ENCODE measurements at regions of chr10 and their contacts with region 1.

Region 1: DNA sequence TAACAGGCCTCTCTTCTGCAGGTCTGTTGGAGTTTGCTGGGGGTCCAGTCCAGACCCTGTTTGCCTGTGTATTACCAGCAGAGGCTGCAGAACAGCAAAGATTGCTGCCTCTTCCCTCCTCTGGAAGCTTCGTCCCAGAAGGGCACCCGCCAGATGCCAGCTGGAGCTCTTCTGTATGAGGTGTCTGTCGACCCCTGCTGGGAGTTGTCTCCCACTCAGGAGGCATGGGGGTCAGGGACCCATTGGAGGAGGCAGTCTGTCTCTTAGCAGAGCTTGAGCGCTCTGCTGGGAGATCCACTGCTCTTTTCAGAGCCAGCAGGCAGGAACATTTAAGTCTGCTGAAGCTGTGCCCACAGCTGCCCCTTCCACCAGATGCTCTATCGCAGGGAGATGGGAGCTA is 361.1 kb upstream of the NRP1 start:
- DNase-seq: no peak
- ATAC-seq: no peak
- H3K4me3 ChIP-seq: no peak overlapping the region
- H3K27ac ChIP-seq: no peak overlapping the region
- H3K4me1 ChIP-seq: no peaks in the 10 kb centered on the region
- H3K27me3 ChIP-seq: no peaks in the 10 kb centered on the region
- CTCF ChIP-seq: no peak
- EP300 ChIP-seq: no peak
- POLR2A ChIP-seq: no peak
- RAD21 ChIP-seq: no peak

Region 2: DNA sequence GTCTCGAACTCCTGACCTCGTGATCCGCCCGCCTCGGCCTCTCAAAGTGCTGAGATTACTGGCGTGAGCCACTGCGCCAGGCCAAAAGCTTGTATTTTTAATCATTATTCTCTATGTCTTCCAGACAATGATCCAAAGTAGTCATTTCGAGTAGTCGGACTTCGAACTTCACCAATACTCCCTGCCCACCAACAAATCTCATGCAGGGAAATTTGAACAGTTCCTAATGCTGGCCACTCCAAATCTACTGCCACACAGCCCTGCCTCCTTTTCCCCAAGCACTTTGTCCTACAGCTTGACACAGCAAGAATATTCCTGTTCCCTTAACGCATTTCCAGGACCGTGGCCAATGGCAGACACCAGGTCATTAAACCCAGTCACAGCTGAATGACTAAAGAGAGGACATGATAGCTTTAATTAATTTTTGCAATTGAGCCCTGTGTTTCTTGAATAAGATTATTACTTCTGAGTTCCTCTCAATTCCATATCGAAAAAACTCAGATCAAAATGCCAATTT is 218.7 kb before region 1 on chr10:
- CTCF ChIA-PET with region 1: no interaction called
- POLR2A ChIA-PET with region 1: no interaction called
- RAD21 ChIA-PET with region 1: no interaction called
- SMC1A ChIA-PET with region 1: no interaction called
- in situ Hi-C with region 1: no loop called
- intact Hi-C with region 1: no loop called
- DNase-seq: no peak
- ATAC-seq: no peak
- H3K4me3 ChIP-seq: no peak overlapping the region
- H3K27ac ChIP-seq: no peak overlapping the region
- H3K4me1 ChIP-seq: no peaks in the 10 kb centered on the region
- H3K27me3 ChIP-seq: no peaks in the 10 kb centered on the region
- CTCF ChIP-seq: no peak
- EP300 ChIP-seq: no peak
- POLR2A ChIP-seq: no peak
- RAD21 ChIP-seq: no peak

Region 3: DNA sequence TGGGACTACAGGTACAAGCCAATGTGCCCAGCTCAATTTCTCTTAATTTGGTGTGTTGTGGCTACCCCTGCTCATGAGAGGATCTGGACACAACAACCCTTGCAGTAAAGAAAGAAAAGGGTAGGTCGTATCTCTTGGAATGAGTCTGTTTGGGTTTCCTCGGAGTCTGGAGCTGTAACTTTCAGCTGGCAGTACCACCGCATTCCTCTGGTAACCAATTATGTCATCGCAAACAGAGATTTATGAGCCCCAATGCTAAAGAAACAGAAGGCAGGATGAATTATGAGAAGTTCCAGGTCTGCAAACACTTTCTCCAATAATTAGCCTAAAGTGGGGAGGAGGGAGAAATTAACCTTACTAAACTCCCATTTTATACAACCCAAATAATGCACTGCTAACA is 174.5 kb before region 1 on chr10:
- CTCF ChIA-PET with region 1: no interaction called
- POLR2A ChIA-PET with region 1: no interaction called
- RAD21 ChIA-PET with region 1: no interaction called
- SMC1A ChIA-PET with region 1: no interaction called
- in situ Hi-C with region 1: no loop called
- intact Hi-C with region 1: no loop called
- DNase-seq: no peak
- ATAC-seq: no peak
- H3K4me3 ChIP-seq: no peak overlapping the region
- H3K27ac ChIP-seq: no peak overlapping the region
- H3K4me1 ChIP-seq: no peaks in the 10 kb centered on the region
- H3K27me3 ChIP-seq: no peaks in the 10 kb centered on the region
- CTCF ChIP-seq: no peak
- EP300 ChIP-seq: no peak
- POLR2A ChIP-seq: no peak
- RAD21 ChIP-seq: no peak

Region 4: DNA sequence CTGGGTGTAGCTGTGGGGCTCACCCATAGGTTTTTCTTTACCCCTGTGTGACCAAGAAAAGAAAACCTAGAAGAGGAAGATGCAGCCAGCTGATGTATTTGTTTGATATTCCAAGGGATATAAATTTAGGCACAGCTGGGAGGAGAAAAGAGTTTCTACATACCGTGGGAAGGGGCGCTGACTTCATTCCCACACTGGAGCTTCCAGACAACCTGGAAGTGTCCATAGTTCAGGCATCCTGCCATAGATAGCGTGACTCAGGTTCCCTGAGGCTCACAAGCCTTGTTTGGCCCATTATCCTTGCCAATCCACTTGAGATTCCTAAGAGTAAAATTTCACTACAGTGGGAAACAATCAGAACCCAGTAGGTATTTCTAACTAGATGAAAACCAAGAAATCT is 10.7 kb after region 1 on chr10:
- CTCF ChIA-PET with region 1: no interaction called
- POLR2A ChIA-PET with region 1: no interaction called
- RAD21 ChIA-PET with region 1: no interaction called
- SMC1A ChIA-PET with region 1: interaction called, 11 read pairs
- in situ Hi-C with region 1: no loop called
- intact Hi-C with region 1: no loop called
- DNase-seq: no peak
- ATAC-seq: no peak
- H3K4me3 ChIP-seq: no peak overlapping the region
- H3K27ac ChIP-seq: no peak overlapping the region
- H3K4me1 ChIP-seq: no peaks in the 10 kb centered on the region
- H3K27me3 ChIP-seq: no peaks in the 10 kb centered on the region
- CTCF ChIP-seq: no peak
- EP300 ChIP-seq: no peak
- POLR2A ChIP-seq: no peak
- RAD21 ChIP-seq: no peak

Region 5: GRCh38 chr10:34049887-34050286 is 354.4 kb after region 1 on chr10:
- CTCF ChIA-PET with region 1: no interaction called
- POLR2A ChIA-PET with region 1: no interaction called
- RAD21 ChIA-PET with region 1: no interaction called
- SMC1A ChIA-PET with region 1: no interaction called
- in situ Hi-C with region 1: no loop called
- intact Hi-C with region 1: no loop called
- DNase-seq: no peak
- ATAC-seq: peak; percentile 68
- H3K4me3 ChIP-seq: no peak overlapping the region
- H3K27ac ChIP-seq: no peak overlapping the region
- H3K4me1 ChIP-seq: no peaks in the 10 kb centered on the region
- H3K27me3 ChIP-seq: no peaks in the 10 kb centered on the region
- CTCF ChIP-seq: no peak
- EP300 ChIP-seq: no peak
- POLR2A ChIP-seq: no peak
- RAD21 ChIP-seq: no peak